GM12878 (cell line): ENCODE measurements at regions of chr4 and their contacts with region 1.

Region 1: GRCh38 chr4:15231265-15232091 is 196.4 kb upstream of the C1QTNF7 start:
- DNase-seq: peak; percentile 16
- ATAC-seq: peak; percentile 97
- H3K4me3 ChIP-seq: no peak overlapping the region
- H3K27ac ChIP-seq: no peak overlapping the region
- H3K4me1 ChIP-seq: peaks cover 11% of the 10 kb centered on the region
- H3K27me3 ChIP-seq: no peaks in the 10 kb centered on the region; a peak in 1 of 4 replicates
- CTCF ChIP-seq: peak; percentile 67 to 78 (median 69)
- EP300 ChIP-seq: no peak
- POLR2A ChIP-seq: no peak
- RAD21 ChIP-seq: peak; percentile 71

Region 2: DNA sequence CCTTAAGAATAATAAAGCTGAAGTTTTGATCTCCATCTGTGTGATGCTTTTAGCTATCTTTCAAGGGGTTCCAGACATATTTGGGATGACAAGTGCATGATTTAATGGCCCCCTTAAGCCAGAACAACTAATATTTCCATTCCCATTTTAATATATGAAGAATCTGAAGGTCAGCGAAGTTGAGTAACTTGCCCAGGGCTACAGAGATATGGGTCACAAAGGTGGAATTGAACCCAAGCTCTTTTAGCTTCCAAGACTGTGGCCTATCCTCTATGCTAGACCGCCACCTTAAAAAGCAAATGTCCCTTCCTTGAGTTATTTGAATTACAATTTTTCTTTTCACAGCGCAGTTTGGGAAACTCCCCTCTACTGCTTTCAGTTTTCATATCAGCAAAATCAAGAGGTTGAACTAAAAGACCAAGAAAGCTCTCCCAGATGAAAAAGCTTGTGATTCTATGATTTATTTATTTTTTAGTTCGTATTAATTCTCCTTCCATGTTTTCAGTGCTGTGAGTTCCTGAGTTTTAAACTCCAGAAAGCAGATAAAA is 21.8 kb after region 1 on chr4:
- CTCF ChIA-PET with region 1: interaction called, 12 read pairs
- POLR2A ChIA-PET with region 1: no interaction called
- RAD21 ChIA-PET with region 1: interaction called, 3 read pairs
- SMC1A ChIA-PET with region 1: interaction called, 7 read pairs
- in situ Hi-C with region 1: no loop called
- intact Hi-C with region 1: no loop called
- DNase-seq: peak; percentile 13
- ATAC-seq: peak; percentile 94
- H3K4me3 ChIP-seq: no peak overlapping the region
- H3K27ac ChIP-seq: no peak overlapping the region
- H3K4me1 ChIP-seq: peaks cover 6% of the 10 kb centered on the region
- H3K27me3 ChIP-seq: no peaks in the 10 kb centered on the region
- CTCF ChIP-seq: no peak
- EP300 ChIP-seq: no peak
- POLR2A ChIP-seq: no peak
- RAD21 ChIP-seq: no peak

Region 3: DNA sequence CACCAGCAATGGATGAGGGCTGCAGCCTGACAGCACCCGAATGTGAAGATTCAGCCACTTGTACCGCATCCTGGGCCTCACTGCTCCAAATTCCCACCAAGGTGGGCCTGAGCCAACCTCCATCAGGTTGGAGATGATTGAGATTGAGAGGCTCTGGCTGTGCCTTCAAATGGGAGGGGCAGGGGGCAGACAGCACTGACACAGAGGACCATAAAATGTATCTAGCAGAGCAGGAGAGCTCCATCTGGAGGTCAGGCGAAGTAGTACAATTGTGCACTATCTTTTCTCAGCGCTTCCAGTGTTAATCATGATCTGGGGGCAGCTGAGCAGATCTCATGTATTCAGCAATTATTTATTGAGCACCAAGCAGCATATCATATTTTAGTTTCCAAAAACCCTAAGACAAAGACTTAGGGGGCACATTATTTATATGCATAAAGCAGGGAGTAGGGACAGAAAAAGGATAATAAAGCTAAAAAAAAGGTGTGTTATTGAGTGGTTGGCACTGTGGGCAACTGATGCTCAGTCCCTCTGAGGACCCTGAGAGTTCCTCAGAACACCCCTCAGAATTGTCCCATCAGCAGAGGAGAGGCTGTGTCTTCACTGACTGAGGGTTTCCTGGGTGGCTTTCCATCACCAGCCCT is 164.8 kb after region 1 on chr4:
- CTCF ChIA-PET with region 1: interaction called, 41 read pairs
- POLR2A ChIA-PET with region 1: no interaction called
- RAD21 ChIA-PET with region 1: interaction called, 6 read pairs
- SMC1A ChIA-PET with region 1: interaction called, 10 read pairs
- in situ Hi-C with region 1: loop called (anchors 5 kb)
- intact Hi-C with region 1: loop called (anchors 1 kb)
- DNase-seq: no peak
- ATAC-seq: peak; percentile 95
- H3K4me3 ChIP-seq: no peak overlapping the region
- H3K27ac ChIP-seq: no peak overlapping the region
- H3K4me1 ChIP-seq: peaks cover 8% of the 10 kb centered on the region
- H3K27me3 ChIP-seq: no peaks in the 10 kb centered on the region
- CTCF ChIP-seq: peak; percentile 78 to 82 (median 82)
- EP300 ChIP-seq: no peak
- POLR2A ChIP-seq: no peak
- RAD21 ChIP-seq: peak; percentile 74

Region 4: DNA sequence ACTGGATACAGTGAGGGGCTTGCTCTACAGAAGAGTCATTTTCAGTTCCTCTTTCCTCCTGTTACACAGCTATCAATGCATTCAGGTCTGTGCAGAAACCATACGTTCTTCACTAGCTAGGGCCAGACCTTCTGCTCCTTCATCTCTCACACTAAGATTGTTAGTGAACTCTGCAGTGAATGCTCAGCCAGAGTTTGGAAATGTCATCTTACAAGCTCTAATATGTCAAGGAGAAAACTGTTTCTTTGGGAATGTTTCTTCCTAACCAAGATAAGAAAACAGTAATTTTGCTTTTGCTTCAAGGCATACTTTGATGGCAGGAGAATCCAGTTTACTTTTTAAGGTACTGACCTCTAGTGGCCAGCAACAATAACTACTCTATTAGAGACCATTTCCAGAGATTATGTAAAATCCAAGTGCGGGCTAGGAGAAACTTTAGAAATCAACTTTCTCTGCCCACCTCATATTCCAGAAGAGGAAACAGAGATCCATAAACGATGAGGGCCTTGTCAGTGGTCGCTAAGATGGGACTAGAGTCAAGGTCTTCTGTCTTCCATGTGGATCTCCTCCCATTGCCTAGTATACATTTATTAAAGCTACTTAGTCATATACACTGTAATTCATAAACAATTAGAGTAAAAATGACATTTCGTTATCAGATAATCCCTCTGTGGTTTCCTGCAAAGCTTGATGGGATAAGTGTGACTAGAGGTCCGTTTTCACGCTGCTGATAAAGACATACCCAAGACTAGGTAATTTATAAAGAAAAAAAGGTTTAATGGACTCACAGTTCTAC is 226.1 kb after region 1 on chr4:
- CTCF ChIA-PET with region 1: interaction called, 50 read pairs
- POLR2A ChIA-PET with region 1: no interaction called
- RAD21 ChIA-PET with region 1: interaction called, 5 read pairs
- SMC1A ChIA-PET with region 1: interaction called, 3 read pairs
- in situ Hi-C with region 1: loop called (anchors 5 kb)
- intact Hi-C with region 1: loop called (anchors 1 kb)
- DNase-seq: peak; percentile 20
- ATAC-seq: peak; percentile 97
- H3K4me3 ChIP-seq: no peak overlapping the region
- H3K27ac ChIP-seq: no peak overlapping the region
- H3K4me1 ChIP-seq: no peaks in the 10 kb centered on the region
- H3K27me3 ChIP-seq: no peaks in the 10 kb centered on the region
- CTCF ChIP-seq: peak; percentile 66 to 71 (median 67)
- EP300 ChIP-seq: no peak
- POLR2A ChIP-seq: no peak
- RAD21 ChIP-seq: peak; percentile 67

Region 5: GRCh38 chr4:15714646-15715435 is 483.4 kb after region 1 on chr4:
- CTCF ChIA-PET with region 1: no interaction called
- POLR2A ChIA-PET with region 1: no interaction called
- RAD21 ChIA-PET with region 1: no interaction called
- SMC1A ChIA-PET with region 1: no interaction called
- in situ Hi-C with region 1: no loop called
- intact Hi-C with region 1: loop called (anchors 10 kb)
- DNase-seq: no peak
- ATAC-seq: no peak
- H3K4me3 ChIP-seq: no peak overlapping the region
- H3K27ac ChIP-seq: no peak overlapping the region
- H3K4me1 ChIP-seq: no peaks in the 10 kb centered on the region
- H3K27me3 ChIP-seq: no peaks in the 10 kb centered on the region
- CTCF ChIP-seq: no peak
- EP300 ChIP-seq: no peak
- POLR2A ChIP-seq: no peak
- RAD21 ChIP-seq: no peak

Region 6: GRCh38 chr4:15956179-15956850 is 724.8 kb after region 1 on chr4:
- CTCF ChIA-PET with region 1: interaction called, 3 read pairs
- POLR2A ChIA-PET with region 1: no interaction called
- RAD21 ChIA-PET with region 1: no interaction called
- SMC1A ChIA-PET with region 1: no interaction called
- in situ Hi-C with region 1: loop called (anchors 25 kb)
- intact Hi-C with region 1: no loop called
- DNase-seq: peak; percentile 55
- ATAC-seq: peak; percentile 90
- H3K4me3 ChIP-seq: no peak overlapping the region
- H3K27ac ChIP-seq: no peak overlapping the region
- H3K4me1 ChIP-seq: 0 out of 2 replicates have a peak, but pooled peaks cover 3% of the 10 kb centered on the region
- H3K27me3 ChIP-seq: no peaks in the 10 kb centered on the region
- CTCF ChIP-seq: peak; percentile 86 to 98 (median 92)
- EP300 ChIP-seq: no peak
- POLR2A ChIP-seq: no peak
- RAD21 ChIP-seq: peak; percentile 95